Caco-2 (cell line): ENCODE measurements at regions of chr10 and their contacts with region 1.

Region 1: DNA sequence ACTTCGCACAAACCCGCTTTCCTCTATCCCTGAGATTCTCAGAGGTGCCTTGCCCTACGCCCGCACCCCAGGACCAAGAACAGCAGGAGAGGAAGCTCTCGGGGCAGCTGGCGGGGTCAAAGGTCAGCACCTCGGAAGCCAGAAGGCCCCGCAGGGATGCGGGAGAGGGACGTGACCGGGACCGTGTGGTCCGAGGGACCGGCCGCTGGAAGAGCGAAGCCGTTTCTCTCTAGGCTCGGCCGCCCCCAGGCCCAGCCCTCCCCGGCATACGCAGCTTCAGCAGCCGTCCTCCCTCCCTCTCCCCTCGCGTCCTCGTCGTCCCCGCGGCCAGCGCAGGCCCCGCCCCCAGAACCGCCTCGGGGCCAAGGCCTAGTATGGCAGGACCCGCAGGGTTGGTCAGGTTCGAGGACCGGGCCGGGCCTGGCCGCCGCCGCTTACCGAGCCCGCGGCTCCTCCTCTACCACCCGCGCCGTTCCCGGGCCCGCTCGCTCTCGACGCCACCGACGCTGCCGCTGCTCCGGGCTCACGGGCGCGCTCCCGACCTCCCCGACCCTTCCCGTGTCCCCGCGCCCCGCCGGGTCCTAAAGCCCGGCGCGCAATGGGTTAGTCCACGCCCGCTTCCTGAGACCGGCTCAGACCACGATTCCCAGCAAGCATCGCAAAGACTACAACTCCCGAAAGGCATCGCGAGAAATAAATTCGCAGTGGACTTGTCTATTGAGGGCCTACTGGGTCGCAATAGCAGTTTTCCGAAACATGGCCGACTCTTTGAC is at the start of gene ARMH3:
- DNase-seq: peak; percentile 96 to 97
- H3K4me3 ChIP-seq: peak within 1 kb of the TSS; percentile 81
- H3K4me3 Mint-ChIP-seq: peak within 1 kb of the TSS; percentile 93
- H3K27ac Mint-ChIP-seq: peak within 1 kb of the TSS; percentile 98
- H3K4me1 ChIP-seq: peaks cover 4% of the 10 kb centered on the region; the same call in 1 of the 2 replicates
- H3K4me1 Mint-ChIP-seq: peaks cover 7% of the 10 kb centered on the region
- H3K27me3 ChIP-seq: no peaks in the 10 kb centered on the region
- H3K27me3 Mint-ChIP-seq: no peaks in the 10 kb centered on the region
- CTCF ChIP-seq: no peak
- total RNA-seq, gene ARMH3: 17.4 and 20.0 TPM in 2 replicates

Region 2: DNA sequence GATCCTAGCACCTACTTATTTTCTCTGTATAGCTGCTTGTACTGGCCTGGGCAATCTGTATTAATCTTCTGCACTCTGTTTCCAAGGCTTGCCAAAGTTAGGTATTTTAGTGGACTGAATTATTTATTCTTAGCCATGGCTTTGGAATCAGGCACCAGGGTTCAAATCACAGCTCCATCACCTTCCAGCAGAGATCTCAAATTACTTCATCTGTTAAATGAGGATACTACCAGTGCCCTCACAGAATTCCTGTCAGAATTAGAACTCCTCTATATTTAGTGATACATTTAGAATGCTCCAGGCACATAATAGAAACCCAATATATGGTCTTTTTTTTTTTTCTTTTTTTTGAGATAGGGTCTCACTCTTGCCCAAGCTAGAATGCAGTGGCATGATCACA is 17.4 kb before region 1 on chr10:
- CTCF ChIA-PET with region 1: no interaction called
- POLR2A ChIA-PET with region 1: no interaction called
- intact Hi-C with region 1: no loop called
- DNase-seq: no peak
- H3K4me3 ChIP-seq: no peak overlapping the region
- H3K4me3 Mint-ChIP-seq: no peak overlapping the region
- H3K27ac Mint-ChIP-seq: no peak overlapping the region
- H3K4me1 ChIP-seq: no peaks in the 10 kb centered on the region
- H3K4me1 Mint-ChIP-seq: no peaks in the 10 kb centered on the region
- H3K27me3 ChIP-seq: no peaks in the 10 kb centered on the region
- H3K27me3 Mint-ChIP-seq: no peaks in the 10 kb centered on the region
- CTCF ChIP-seq: no peak

Region 3: DNA sequence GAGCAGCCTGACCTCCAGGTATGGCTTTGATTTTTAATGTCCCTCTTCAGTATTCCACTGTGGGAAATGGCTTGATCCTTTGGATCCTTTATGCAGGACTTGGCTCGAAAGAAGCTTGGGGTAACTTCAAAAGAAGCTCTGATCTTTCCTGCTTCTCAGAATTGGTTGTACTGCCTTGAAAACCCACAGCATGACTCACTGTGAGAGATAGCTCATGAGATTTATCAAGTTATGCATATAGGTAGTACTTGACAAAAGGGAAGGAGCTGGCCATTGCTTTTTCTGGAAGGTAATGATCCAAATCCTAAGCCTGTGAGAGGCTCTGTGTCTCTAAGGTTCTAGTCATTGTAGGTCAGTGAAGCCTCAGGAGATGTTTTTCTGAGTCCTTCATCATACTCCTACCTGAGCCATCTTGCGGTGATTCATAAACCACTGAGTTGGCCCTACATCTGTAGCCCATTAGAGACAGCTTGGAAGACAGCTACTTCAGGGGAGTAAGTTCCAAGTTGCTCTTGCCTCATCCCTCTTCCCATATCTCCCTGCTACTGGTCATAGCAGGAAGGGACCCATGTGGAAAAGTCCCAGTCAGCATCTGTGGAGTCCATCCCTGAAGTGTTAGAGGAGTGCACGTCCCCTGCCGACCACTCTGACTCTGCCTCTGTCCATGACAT is 303.0 kb after region 1 on chr10:
- CTCF ChIA-PET with region 1: interaction called, 11 read pairs
- POLR2A ChIA-PET with region 1: no interaction called
- intact Hi-C with region 1: no loop called
- DNase-seq: no peak
- H3K4me3 ChIP-seq: no peak overlapping the region
- H3K4me3 Mint-ChIP-seq: no peak overlapping the region
- H3K27ac Mint-ChIP-seq: no peak overlapping the region
- H3K4me1 ChIP-seq: no peaks in the 10 kb centered on the region
- H3K4me1 Mint-ChIP-seq: no peaks in the 10 kb centered on the region
- H3K27me3 ChIP-seq: no peaks in the 10 kb centered on the region
- H3K27me3 Mint-ChIP-seq: no peaks in the 10 kb centered on the region
- CTCF ChIP-seq: no peak